ENCODE measurements at regions of chr9 and their contacts with region 1.

Region 1: GRCh38 chr9:137590462-137591383 is at the start of gene ZMYND19:
- DNase-seq: peak; percentile 94
- ATAC-seq: peak; percentile 97
- H3K4me3 Mint-ChIP-seq: peak within 1 kb of the TSS; percentile 87
- H3K27ac Mint-ChIP-seq: peak within 1 kb of the TSS; percentile 95
- H3K4me1 Mint-ChIP-seq: peaks cover 17% of the 10 kb centered on the region
- H3K27me3 Mint-ChIP-seq: no peaks in the 10 kb centered on the region
- total RNA-seq, gene ZMYND19: 36.2 to 43.0 TPM

Region 2: DNA sequence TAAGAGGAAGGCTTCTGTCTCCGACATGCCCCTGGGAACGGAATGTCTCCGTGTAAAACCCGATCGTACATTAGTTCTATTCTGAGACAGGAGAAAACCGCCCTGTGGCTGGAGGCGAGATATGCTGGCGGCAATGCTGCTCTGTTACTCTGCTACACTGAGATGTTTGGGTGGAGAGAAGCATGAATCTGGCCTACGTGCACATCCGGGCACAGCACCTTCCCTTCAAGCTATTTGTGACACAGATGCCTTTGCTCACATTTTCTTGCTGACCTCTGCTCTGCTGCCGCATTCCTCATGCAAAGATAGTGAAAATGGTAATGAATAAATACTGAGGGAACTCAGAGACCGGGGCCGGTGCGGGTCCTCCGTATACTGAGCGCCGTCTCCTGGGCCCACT is 474.0 kb before region 1 on chr9:
- CTCF ChIA-PET with region 1: no interaction called
- POLR2A ChIA-PET with region 1: no interaction called
- intact Hi-C with region 1: no loop called
- DNase-seq: no peak
- ATAC-seq: no peak
- H3K4me3 Mint-ChIP-seq: no peak overlapping the region
- H3K27ac Mint-ChIP-seq: no peak overlapping the region
- H3K4me1 Mint-ChIP-seq: peaks cover 13% of the 10 kb centered on the region
- H3K27me3 Mint-ChIP-seq: no peaks in the 10 kb centered on the region

Region 3: DNA sequence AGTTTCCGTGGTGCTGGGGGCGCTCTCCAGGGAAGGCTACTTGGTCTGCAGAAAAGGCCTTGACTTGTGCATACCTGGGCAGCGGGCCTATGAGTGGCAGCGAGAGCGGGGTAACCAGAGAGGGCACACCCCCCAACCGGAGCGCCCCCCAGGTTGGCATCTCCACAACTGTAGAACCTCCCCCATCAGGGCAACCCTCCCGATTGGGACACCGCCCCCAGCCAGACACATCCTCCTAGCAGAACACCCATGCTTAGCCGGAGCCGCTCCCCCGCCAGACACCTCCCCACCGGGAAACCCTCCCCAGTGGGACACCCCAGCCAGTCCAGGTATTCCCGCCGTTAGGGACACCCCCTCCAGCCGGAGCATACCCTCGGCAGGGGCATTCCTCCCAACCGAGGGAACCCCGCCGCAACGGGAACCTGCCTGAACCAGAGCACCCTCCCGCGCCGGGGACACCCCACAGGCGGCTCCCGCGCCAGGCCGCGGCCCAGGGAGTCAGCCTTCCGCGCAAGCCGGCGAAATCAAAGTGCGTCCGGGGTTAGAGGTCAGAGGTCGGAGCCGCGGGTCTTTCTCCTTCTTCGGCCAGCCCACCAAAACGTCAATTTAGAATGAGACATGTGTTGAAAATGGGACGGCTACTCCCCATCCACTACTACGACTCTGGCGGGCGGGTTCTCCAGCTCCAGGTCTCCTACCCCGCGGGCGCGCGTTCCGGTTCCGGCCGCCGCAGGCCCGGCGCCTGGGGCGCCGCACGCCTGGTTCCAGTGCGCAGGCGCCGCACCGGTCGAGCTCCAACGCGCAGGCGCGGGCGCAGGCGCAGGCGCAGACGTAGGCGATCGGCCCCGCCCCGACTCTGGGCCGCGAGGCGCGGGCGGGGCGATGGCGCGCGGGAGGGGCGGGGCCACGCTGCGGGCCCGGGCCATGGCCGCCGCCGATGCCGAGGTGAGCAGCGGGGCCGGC is 27.7 kb after region 1 on chr9 and contains the start of gene EHMT1:
- CTCF ChIA-PET with region 1: interaction called, 3 read pairs
- POLR2A ChIA-PET with region 1: no interaction called
- intact Hi-C with region 1: loop called (anchors 1 to 2 kb)
- DNase-seq: peak; percentile 92
- ATAC-seq: peak; percentile 82
- H3K4me3 Mint-ChIP-seq: peak within 1 kb of the TSS; percentile 85
- H3K27ac Mint-ChIP-seq: peak within 1 kb of the TSS; percentile 90
- H3K4me1 Mint-ChIP-seq: peaks cover 37% of the 10 kb centered on the region
- H3K27me3 Mint-ChIP-seq: no peaks in the 10 kb centered on the region
- total RNA-seq, gene EHMT1: 66.6 to 76.7 TPM

Region 4: DNA sequence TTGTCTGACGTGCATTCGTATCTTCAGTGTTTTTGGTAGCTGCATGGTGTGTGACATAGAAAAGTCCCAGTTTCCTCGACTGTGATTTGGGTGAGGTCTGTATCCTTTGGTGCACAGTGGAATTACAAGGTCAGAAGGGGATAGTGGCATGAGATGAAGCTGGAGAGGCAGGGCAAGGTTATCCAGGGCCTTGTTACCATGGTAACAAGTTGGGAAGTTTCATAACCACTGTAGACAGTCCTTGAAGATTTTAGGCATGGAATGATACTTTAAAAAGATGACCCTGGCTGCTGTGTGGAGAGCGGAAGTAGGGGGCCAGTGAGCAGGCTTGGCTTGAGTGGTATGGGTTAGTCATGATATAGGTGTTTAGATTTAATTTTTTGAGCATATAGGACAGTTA is 40.0 kb after region 1 on chr9:
- CTCF ChIA-PET with region 1: no interaction called
- POLR2A ChIA-PET with region 1: no interaction called
- intact Hi-C with region 1: no loop called
- DNase-seq: no peak
- ATAC-seq: no peak
- H3K4me3 Mint-ChIP-seq: no peak overlapping the region
- H3K27ac Mint-ChIP-seq: peak overlapping the region; percentile 2
- H3K4me1 Mint-ChIP-seq: peaks cover 63% of the 10 kb centered on the region
- H3K27me3 Mint-ChIP-seq: no peaks in the 10 kb centered on the region

Measured in activated CD4-positive, alpha-beta T cell treated with anti-CD3 and anti-CD28 coated beads for 36 hours (primary cell).